H1 (cell line): ENCODE measurements at regions of chr4 and their contacts with region 1.

Region 1: GRCh38 chr4:121252224-121252806 is 88.2 kb upstream of the TNIP3 start:
- DNase-seq: peak; percentile 25 to 63
- H3K4me3 ChIP-seq: no peak overlapping the region
- H3K27ac ChIP-seq: no peak overlapping the region
- H3K4me1 ChIP-seq: no peaks in the 10 kb centered on the region; a peak in 1 of 7 replicates
- H3K27me3 ChIP-seq: peaks cover 0 to 1% (median 0%) of the 10 kb centered on the region in 4 experiments; a peak in 1 of 7 replicates
- CTCF ChIP-seq: peak; percentile 52 to 88 (median 79)
- EP300 ChIP-seq: no peak
- POLR2A ChIP-seq: no peak
- RAD21 ChIP-seq: peak; percentile 64 to 79

Region 2: GRCh38 chr4:121139533-121140222 is 112.6 kb before region 1 on chr4:
- CTCF ChIA-PET with region 1: no interaction called
- POLR2A ChIA-PET with region 1: no interaction called
- DNase-seq: no peak
- H3K4me3 ChIP-seq: no peak overlapping the region
- H3K27ac ChIP-seq: no peak overlapping the region
- H3K4me1 ChIP-seq: no peaks in the 10 kb centered on the region
- H3K27me3 ChIP-seq: no peaks in the 10 kb centered on the region
- CTCF ChIP-seq: no peak
- EP300 ChIP-seq: no peak
- POLR2A ChIP-seq: no peak
- RAD21 ChIP-seq: no peak

Region 3: GRCh38 chr4:121227341-121227792 is 24.9 kb before region 1 on chr4:
- CTCF ChIA-PET with region 1: interaction called, 13 read pairs
- POLR2A ChIA-PET with region 1: no interaction called
- DNase-seq: no peak
- H3K4me3 ChIP-seq: no peak overlapping the region
- H3K27ac ChIP-seq: no peak overlapping the region
- H3K4me1 ChIP-seq: peaks cover 0 to 2% (median 0%) of the 10 kb centered on the region in 4 experiments; a peak in 1 of 7 replicates
- H3K27me3 ChIP-seq: peaks cover 0 to 1% (median 0%) of the 10 kb centered on the region in 4 experiments; a peak in 1 of 7 replicates
- CTCF ChIP-seq: peak in 1 of 3 experiments; percentile 14; a peak in 1 of 4 replicates
- EP300 ChIP-seq: no peak
- POLR2A ChIP-seq: no peak
- RAD21 ChIP-seq: no peak